ENCODE measurements at regions of chr11 and their contacts with region 1.

Region 1: GRCh38 chr11:75388386-75389275 is 10.7 kb upstream of the RPS3 start:
- DNase-seq: peak; percentile 72 to 88 (median 82)
- H3K4me3 ChIP-seq: no peak overlapping the region
- H3K27ac ChIP-seq: no peak overlapping the region
- H3K4me1 ChIP-seq: peaks cover 0 to 3% (median 0%) of the 10 kb centered on the region in 3 donors
- H3K27me3 ChIP-seq: no peaks in the 10 kb centered on the region
- CTCF ChIP-seq: peak; percentile 74

Region 2: DNA sequence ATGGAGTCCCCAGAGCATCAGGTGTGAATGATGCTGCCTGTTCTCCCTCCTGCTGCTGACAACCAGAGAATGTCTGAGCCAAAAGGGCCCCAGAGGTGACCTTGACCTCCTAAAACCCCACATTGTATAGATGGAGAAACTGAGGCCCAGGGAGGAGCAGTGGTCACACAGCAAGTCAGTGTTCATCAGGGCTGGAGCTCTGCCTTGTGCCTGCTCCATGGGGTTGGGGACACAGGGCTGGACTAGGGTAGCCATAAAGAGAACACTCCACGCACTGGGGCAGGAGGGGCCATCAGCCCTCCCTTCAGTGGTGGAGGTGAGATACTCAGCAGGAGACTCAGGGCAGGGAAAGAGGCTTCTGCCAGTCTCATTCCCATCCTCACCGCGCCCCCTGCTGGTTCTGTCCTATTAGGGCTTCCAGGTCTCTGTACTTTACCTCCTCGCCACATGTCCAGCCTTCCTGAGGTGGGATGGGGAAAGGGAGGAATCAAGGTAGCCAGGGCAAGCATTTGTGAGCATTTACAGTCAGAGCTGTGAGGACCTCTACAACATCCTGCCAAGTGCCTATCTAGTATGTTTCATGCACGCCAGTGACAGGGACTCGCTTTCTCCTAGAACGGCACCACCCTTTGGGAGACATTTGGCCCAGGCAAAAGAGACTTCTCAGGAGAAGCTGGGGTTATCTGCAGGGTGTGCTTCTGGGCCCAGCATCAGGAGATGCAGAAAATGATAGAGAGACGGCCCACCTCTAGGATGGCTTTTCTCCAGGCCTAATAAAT is 356.7 kb before region 1 on chr11:
- intact Hi-C with region 1: no loop called
- DNase-seq: peak; percentile 53 to 80 (median 74)
- H3K4me3 ChIP-seq: no peak overlapping the region
- H3K27ac ChIP-seq: no peak overlapping the region
- H3K4me1 ChIP-seq: no peaks in the 10 kb centered on the region
- H3K27me3 ChIP-seq: no peaks in the 10 kb centered on the region
- CTCF ChIP-seq: peak; percentile 88

Region 3: GRCh38 chr11:75195121-75195551 is 193.5 kb before region 1 on chr11:
- intact Hi-C with region 1: no loop called
- DNase-seq: no peak
- H3K4me3 ChIP-seq: no peak overlapping the region
- H3K27ac ChIP-seq: peak overlapping the region in 1 of 2 donors; percentile 5
- H3K4me1 ChIP-seq: peaks cover 0 to 8% (median 3%) of the 10 kb centered on the region in 3 donors
- H3K27me3 ChIP-seq: no peaks in the 10 kb centered on the region
- CTCF ChIP-seq: no peak

Region 4: GRCh38 chr11:75275581-75275980 is 113.0 kb before region 1 on chr11:
- intact Hi-C with region 1: loop called (anchors 5 kb)
- DNase-seq: peak in 1 of 5 donors; percentile 81
- H3K4me3 ChIP-seq: no peak overlapping the region
- H3K27ac ChIP-seq: no peak overlapping the region
- H3K4me1 ChIP-seq: no peaks in the 10 kb centered on the region
- H3K27me3 ChIP-seq: no peaks in the 10 kb centered on the region
- CTCF ChIP-seq: no peak

Region 5: DNA sequence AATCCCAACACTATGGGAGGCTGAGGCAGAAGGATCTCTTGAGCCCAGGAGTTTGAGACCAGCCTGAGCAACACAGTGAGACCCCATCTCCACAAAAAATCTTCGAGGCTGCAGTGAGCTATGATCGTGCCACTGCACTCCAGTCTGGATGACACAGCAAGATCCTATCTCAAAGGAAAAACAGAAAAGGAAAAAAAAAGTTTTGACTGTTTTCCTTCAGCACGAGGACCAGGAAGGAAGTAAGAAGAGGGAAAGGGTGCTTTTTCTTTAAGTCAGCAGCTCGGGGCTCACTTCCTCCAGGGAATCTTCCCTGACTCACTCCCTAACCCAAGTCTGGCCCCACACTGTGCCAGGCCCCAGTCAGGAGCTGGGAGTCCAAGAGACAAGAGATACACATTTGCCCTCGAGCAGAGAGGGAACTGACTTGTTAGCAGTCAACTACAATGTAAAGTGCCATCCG is 51.4 kb before region 1 on chr11:
- intact Hi-C with region 1: loop called (anchors 10 kb)
- DNase-seq: no peak
- H3K4me3 ChIP-seq: no peak overlapping the region
- H3K27ac ChIP-seq: peak overlapping the region in 1 of 2 donors; percentile 56
- H3K4me1 ChIP-seq: peaks cover 8 to 61% (median 38%) of the 10 kb centered on the region in 3 donors
- H3K27me3 ChIP-seq: no peaks in the 10 kb centered on the region
- CTCF ChIP-seq: no peak